WTC11 (cell line): ENCODE measurements at regions of chr12 and their contacts with region 1.

Region 1: GRCh38 chr12:130849561-130850417 is 10.7 kb upstream of the STX2 start:
- DNase-seq: peak; percentile 34
- ATAC-seq: peak; percentile 38
- H3K4me3 Mint-ChIP-seq: peak overlapping the region; percentile 37
- H3K27ac Mint-ChIP-seq: peak overlapping the region; percentile 99
- H3K4me1 Mint-ChIP-seq: peaks cover 36% of the 10 kb centered on the region
- H3K27me3 Mint-ChIP-seq: no peaks in the 10 kb centered on the region
- CTCF ChIP-seq: no peak

Region 2: GRCh38 chr12:130826149-130826801 is 23.5 kb before region 1 on chr12:
- CTCF ChIA-PET with region 1: interaction called, 10 read pairs
- POLR2A ChIA-PET with region 1: interaction called, 4 read pairs
- DNase-seq: peak; percentile 83
- ATAC-seq: peak; percentile 88
- H3K4me3 Mint-ChIP-seq: no peak overlapping the region
- H3K27ac Mint-ChIP-seq: peak overlapping the region; percentile 80
- H3K4me1 Mint-ChIP-seq: peaks cover 36% of the 10 kb centered on the region
- H3K27me3 Mint-ChIP-seq: no peaks in the 10 kb centered on the region
- CTCF ChIP-seq: peak; percentile 98

Region 3: DNA sequence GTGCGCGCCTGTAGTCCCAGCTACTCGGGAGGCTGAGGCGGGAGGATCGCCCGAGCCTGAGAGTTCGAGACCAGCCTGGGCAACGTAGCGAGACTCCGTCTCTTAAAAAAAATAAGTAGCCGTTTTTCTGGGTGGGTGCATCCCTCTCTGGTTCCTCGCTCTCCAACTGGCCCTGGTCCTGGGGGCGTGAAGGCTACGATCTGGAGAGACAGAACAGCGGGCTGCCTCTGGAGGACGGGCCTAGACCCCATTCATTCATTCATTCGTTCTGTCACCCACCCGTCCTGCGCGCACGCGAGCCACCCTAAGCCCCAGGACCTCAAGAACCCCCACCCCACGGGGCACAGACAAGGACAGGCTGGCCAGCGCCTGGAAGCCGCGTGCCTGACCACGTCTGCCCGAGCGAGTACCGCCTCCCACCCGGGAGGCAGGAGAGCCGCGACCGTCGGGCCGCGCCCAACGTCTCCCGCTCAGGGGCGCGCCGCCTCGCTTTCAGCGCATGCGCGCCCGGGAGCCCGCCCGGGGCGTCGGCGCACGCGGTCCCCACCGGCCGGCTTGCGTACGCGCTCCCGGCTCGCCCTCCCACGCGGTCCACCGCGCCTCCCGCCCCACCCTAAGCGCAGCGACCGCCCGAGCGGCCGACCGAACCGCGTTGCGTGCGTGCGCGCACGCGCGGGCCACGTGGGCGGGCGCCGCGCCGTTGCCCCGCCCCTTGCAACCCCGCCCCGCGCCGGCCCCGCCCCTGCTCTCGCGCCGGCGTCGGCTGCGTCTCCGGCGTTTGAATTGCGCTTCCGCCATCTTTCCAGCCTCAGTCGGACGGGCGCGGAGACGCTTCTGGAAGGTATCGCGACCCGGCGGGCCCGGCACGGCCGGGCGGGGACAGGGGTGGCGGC is 21.7 kb after region 1 on chr12 and contains the start of gene RAN:
- CTCF ChIA-PET with region 1: interaction called, 22 read pairs
- POLR2A ChIA-PET with region 1: interaction called, 5 read pairs
- DNase-seq: peak; percentile 80
- ATAC-seq: peak; percentile 71
- H3K4me3 Mint-ChIP-seq: peak within 1 kb of the TSS; percentile 97
- H3K27ac Mint-ChIP-seq: peak within 1 kb of the TSS; percentile 99
- H3K4me1 Mint-ChIP-seq: peaks cover 51% of the 10 kb centered on the region
- H3K27me3 Mint-ChIP-seq: no peaks in the 10 kb centered on the region; the same call in 1 of the 2 replicates
- CTCF ChIP-seq: no peak
- total RNA-seq, gene RAN: 1,744 to 1,783 TPM (median 1,745 TPM) in 3 replicates